Gastrocnemius medialis (tissue), 4 donors: ENCODE measurements at regions of chr5 and their contacts with region 1.

Region 1: DNA sequence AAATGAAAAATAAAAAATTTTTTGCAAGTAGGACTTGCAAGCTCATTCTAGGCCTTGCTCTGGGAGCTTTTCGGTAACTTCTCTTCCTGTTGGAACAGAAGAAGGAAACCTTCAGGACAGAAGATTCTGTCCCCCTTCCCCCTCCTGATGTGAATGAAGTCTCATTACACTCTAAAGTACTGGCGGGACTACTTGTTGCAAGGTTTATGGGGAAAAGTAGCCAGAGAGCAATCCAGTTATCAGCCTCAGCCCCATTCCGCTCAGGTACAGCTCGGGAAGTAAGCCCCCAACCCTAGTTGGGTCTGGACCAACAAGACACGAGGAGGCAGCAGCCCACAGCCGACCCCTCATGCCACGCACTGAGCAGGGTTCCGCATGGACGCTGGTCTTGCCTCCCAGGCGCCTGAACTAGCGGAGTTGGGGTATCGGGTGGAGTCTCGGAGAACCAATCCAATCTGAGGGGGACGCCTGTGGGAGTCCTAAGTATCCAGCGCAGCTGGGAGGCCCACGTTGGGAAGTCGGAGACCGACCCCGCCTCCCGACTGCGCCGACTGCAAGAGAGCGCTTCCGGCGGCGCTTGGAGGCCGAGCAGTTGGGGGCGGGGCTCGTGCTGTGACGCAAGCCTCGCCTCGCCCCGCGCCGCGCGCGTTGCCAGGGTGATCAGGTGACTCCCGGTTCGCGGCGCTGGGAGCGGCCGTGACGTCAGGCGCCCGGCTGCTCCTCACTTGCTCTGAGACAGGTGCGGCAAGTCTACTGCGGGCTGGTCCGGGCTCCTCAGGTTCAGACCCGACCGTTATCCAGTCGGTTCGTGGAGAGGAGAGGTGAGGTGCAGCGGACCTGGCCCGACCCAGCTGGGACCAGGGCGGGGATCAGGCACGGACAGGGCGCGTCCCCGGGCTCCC is at the start of gene CYSTM1:
- DNase-seq: peak; percentile 94 to 97
- ATAC-seq: peak; percentile 74 to 76
- H3K4me3 ChIP-seq: peak within 1 kb of the TSS; percentile 87 to 98 (median 88)
- H3K27ac ChIP-seq: peak within 1 kb of the TSS; percentile 97 to 99 (median 98)
- H3K4me1 ChIP-seq: peaks cover 35 to 37% of the 10 kb centered on the region in 2 donors
- H3K27me3 ChIP-seq: no peaks in the 10 kb centered on the region
- CTCF ChIP-seq: peak in 1 of 5 experiments; percentile 40
- POLR2A ChIP-seq: peak; percentile 98 to 99
- total RNA-seq, gene CYSTM1: 304 to 593 (median 336) TPM

Region 2: GRCh38 chr5:140107312-140108083 is 67.2 kb before region 1 on chr5:
- in situ Hi-C with region 1: no loop called
- intact Hi-C with region 1: loop called (anchors 2 kb)
- DNase-seq: peak; percentile 88 to 92
- ATAC-seq: peak; percentile 94 to 96
- H3K4me3 ChIP-seq: peak overlapping the region; percentile 80 to 89 (median 84)
- H3K27ac ChIP-seq: peak overlapping the region; percentile 98 to 100 (median 98)
- H3K4me1 ChIP-seq: peaks cover 34 to 39% of the 10 kb centered on the region in 2 donors
- H3K27me3 ChIP-seq: no peaks in the 10 kb centered on the region
- CTCF ChIP-seq: peak in 4 of 5 experiments; percentile 21 to 37 (median 30)
- POLR2A ChIP-seq: peak; percentile 91 to 93

Region 3: GRCh38 chr5:140207250-140207964 is 32.7 kb after region 1 on chr5:
- in situ Hi-C with region 1: no loop called
- intact Hi-C with region 1: no loop called
- DNase-seq: no peak
- ATAC-seq: peak in 1 of 2 donors; percentile 51
- H3K4me3 ChIP-seq: no peak overlapping the region
- H3K27ac ChIP-seq: peak overlapping the region; percentile 72 to 86 (median 82)
- H3K4me1 ChIP-seq: peaks cover 50 to 52% of the 10 kb centered on the region in 2 donors
- H3K27me3 ChIP-seq: no peaks in the 10 kb centered on the region
- CTCF ChIP-seq: no peak
- POLR2A ChIP-seq: no peak

Region 4: DNA sequence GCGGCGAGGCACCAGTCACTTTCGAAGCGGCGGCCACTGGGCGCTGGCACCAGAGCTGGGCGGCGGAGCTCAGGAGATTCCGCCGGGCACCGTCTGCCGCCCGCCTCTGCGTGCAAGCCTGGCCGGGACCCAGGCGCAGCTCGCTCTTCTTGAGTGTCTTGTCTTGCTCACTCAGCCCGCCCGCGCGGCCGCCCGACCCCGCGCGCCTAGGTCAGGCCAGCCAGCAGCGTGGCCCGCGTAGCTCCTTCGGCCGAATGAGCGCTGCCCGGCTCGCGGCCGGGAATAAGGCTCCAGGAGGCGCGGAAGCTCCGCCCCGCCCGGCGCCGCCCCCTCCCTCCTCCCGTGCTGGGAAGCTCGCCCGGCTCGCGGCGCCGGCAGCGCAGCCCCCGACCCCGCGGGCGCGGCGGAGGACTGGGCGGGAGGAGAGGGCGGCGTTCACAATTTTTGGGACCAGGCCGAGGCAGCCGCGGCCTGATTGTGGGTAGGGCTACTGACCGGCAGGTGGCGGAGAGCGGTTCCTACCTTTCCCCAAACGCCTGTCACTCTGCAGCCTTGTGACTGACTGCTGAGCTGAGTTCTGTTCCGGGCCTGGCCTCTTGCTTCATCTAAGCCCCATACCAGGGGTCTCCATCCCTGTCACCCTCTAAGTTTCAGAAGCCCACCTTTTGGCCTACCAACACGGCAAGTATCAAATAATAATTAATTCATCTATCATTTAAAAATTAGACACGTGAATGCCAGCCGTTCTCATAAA is 171.8 kb after region 1 on chr5 and contains the start of gene HBEGF:
- in situ Hi-C with region 1: loop called in 2 of 4 experiments (anchors 5 to 10 kb)
- intact Hi-C with region 1: loop called (anchors 2 kb)
- DNase-seq: peak; percentile 82 to 88
- ATAC-seq: peak; percentile 69 to 71
- H3K4me3 ChIP-seq: peak within 1 kb of the TSS; percentile 75 to 98 (median 78)
- H3K27ac ChIP-seq: peak within 1 kb of the TSS; percentile 91 to 97 (median 94)
- H3K4me1 ChIP-seq: peaks cover 56 to 57% of the 10 kb centered on the region in 2 donors
- H3K27me3 ChIP-seq: no peaks in the 10 kb centered on the region
- CTCF ChIP-seq: peak; percentile 46 to 73 (median 60)
- POLR2A ChIP-seq: peak; percentile 90 to 97
- total RNA-seq, gene HBEGF: 5.3 to 22.2 (median 17.6) TPM

Region 5: GRCh38 chr5:140351609-140352334 is 177.1 kb after region 1 on chr5:
- in situ Hi-C with region 1: loop called in 2 of 4 experiments (anchors 5 to 10 kb)
- intact Hi-C with region 1: loop called (anchors 2 kb)
- DNase-seq: no peak
- ATAC-seq: peak in 1 of 2 donors; percentile 39
- H3K4me3 ChIP-seq: no peak overlapping the region
- H3K27ac ChIP-seq: no peak overlapping the region
- H3K4me1 ChIP-seq: peaks cover 14 to 21% of the 10 kb centered on the region in 2 donors
- H3K27me3 ChIP-seq: no peaks in the 10 kb centered on the region
- CTCF ChIP-seq: peak; percentile 82 to 94 (median 86)
- POLR2A ChIP-seq: no peak